PC-9 (cell line): ENCODE measurements at regions of chr6 and their contacts with region 1.

Region 1: DNA sequence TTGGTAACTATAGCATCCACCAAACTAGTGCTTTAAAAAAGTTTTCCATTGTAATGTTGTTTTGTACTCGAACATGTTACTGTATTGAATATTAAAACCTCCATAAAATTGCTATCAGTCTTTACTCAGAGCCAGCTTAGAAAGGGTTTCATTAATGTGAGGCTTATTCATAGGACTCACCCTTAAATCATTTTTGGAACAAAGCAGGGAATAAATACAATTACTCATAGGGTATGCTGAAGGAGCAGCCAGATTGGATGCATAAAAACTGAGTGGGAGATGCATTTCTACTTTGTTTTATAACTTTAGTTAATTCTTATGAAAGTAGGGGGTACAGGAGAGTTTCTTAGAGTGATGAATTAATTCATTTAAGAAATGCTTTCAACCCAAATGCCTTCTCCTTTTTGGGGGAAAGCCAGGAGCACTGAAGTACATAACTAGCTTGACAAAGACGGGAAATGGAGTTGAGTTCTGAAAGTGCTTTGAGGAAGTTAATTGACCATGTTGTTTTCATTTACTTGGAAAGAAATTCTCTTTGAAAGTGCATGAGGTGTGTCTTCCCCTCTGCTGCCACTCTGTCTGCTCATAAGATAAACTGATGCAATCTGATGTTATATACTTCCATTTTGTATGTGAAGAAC is 90.3 kb downstream of the RNF144B start:
- DNase-seq: no peak
- H3K4me3 ChIP-seq: no peak overlapping the region
- H3K27ac ChIP-seq: no peak overlapping the region
- H3K4me1 ChIP-seq: no peaks in the 10 kb centered on the region
- H3K27me3 ChIP-seq: no peaks in the 10 kb centered on the region
- CTCF ChIP-seq: no peak

Region 2: GRCh38 chr6:19035461-19036195 is 558.2 kb after region 1 on chr6:
- CTCF ChIA-PET with region 1: interaction called, 10 read pairs
- POLR2A ChIA-PET with region 1: no interaction called
- intact Hi-C with region 1: no loop called
- DNase-seq: no peak
- H3K4me3 ChIP-seq: no peak overlapping the region
- H3K27ac ChIP-seq: no peak overlapping the region
- H3K4me1 ChIP-seq: no peaks in the 10 kb centered on the region
- H3K27me3 ChIP-seq: no peaks in the 10 kb centered on the region
- CTCF ChIP-seq: no peak